Thyroid gland (tissue), 4 donors: ENCODE measurements at regions of chr3 and their contacts with region 1.

Region 1: GRCh38 chr3:112519424-112520001 is 20.2 kb upstream of the BTLA start:
- DNase-seq: peak in 1 of 2 donors; percentile 9
- H3K4me3 ChIP-seq: no peak overlapping the region
- H3K27ac ChIP-seq: no peak overlapping the region
- H3K4me1 ChIP-seq: no peaks in the 10 kb centered on the region
- H3K27me3 ChIP-seq: no peaks in the 10 kb centered on the region
- CTCF ChIP-seq: peak; percentile 20 to 95 (median 65)
- POLR2A ChIP-seq: no peak

Region 2: DNA sequence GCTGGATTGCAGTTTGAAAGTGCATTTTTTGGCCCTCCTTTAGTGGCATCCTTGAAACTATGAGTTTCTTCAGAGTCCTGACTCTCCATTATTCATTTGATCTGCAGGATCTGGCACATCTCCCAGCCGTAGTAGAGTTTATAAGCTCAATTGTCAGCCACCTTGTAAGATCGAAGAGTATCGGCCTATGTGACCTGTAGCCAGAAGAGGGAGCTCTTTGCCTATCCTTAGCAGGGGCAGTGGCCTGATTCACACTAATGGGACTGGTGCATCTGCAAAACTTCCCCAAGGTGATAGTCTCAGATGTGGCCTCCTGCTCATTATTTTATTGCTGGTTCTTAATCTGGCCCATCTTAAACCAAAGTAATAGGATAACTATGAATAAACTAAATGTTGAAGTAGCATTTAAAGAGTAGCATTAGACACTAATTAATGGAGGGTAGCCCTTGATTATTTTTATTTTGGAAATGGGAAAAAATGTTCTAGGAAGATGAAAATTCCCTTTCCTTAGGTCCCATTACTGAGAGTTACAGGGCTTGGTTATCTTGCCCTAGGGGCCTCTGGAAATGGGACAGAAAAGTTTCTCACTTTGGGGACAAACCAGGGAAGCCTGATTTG is 407.6 kb before region 1 on chr3:
- intact Hi-C with region 1: loop called (anchors 10 kb)
- DNase-seq: peak; percentile 34 to 36
- H3K4me3 ChIP-seq: no peak overlapping the region
- H3K27ac ChIP-seq: no peak overlapping the region
- H3K4me1 ChIP-seq: no peaks in the 10 kb centered on the region
- H3K27me3 ChIP-seq: no peaks in the 10 kb centered on the region
- CTCF ChIP-seq: peak; percentile 16 to 58 (median 46)
- POLR2A ChIP-seq: no peak

Region 3: DNA sequence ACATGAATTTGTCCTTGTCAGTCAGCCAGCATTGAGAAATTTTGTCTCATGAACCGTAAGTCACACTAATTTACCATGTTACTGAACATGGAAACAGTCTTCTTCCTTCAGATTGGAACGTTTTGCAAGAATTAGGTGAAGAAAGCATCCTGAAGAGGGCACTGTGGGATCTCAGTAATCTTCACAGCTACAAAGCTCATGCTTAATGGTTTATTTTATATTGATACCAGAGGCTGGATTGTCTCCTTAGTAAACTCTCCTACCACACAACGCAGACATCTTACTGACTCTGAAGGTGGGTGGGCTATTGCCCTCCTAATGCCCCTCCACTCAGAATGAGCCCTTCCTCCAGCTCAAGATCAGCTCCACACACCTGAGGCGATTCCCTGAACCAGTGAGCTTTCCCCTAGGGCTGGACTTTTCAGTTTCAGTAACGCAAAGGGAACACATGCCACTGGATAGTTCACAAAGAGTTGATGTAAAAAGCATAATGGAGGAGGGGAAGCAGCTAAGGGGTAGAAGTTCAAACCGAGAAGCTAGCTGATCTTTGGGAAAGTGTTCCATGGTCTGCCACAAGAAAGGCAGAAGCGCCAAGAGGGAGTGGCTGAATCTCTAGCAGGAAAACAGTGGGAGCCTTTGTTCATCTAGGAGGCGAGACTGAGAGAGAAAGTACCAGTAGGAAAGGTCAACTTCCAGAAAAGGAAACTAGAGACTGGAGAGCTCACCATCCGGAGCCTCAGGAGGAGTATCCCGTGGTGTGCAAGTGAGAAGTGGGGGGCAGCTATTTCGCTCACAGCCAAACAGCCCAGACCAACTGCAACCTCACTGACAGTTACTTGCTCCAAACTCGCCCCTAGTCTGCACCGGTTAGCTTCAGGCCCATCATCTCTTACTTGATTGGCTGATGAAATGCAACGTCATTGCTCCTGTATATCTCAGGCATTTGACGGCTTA is 225.9 kb before region 1 on chr3 and contains the start of gene SLC9C1:
- intact Hi-C with region 1: loop called (anchors 10 kb)
- DNase-seq: peak; percentile 26 to 28
- H3K4me3 ChIP-seq: peak within 1 kb of the TSS in 1 of 3 donors; percentile 8
- H3K27ac ChIP-seq: peak within 1 kb of the TSS; percentile 10 to 87 (median 69)
- H3K4me1 ChIP-seq: no peaks in the 10 kb centered on the region
- H3K27me3 ChIP-seq: no peaks in the 10 kb centered on the region
- CTCF ChIP-seq: peak in 5 of 6 experiments; percentile 17 to 80 (median 56)
- POLR2A ChIP-seq: peak in 1 of 2 donors; percentile 33
- total RNA-seq, gene SLC9C1: 0.11 TPM in 1 of 4 donors, not detected in the others

Region 4: DNA sequence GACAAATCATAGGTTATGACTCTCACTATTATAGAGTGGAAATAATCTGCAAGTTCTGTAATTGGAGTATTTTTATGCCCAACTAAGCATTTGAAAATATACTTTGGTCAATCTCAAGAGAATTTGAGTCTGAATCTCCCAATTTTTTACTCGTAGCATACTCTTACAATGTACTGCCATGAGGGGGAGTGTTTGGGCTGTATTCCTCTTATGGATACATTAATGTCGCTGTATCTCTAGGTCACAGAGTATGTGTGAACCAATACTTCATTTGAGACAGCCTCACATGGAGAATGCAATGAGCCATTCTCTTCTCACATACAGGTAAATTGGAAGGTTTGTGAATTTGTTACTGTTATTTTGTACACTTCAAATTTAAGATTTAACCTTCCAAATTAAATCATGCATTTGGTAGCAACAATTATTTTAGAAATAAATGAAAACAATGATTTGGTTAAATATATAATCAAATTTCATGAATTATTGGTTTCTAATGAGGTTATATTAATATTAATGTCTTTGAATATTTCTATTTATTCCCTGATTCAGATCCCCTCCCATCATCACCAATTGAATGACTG is 192.1 kb before region 1 on chr3:
- intact Hi-C with region 1: loop called (anchors 10 kb)
- DNase-seq: peak in 1 of 2 donors; percentile 21
- H3K4me3 ChIP-seq: no peak overlapping the region
- H3K27ac ChIP-seq: no peak overlapping the region
- H3K4me1 ChIP-seq: no peaks in the 10 kb centered on the region
- H3K27me3 ChIP-seq: no peaks in the 10 kb centered on the region
- CTCF ChIP-seq: peak in 5 of 6 experiments; percentile 43 to 96 (median 73)
- POLR2A ChIP-seq: no peak